ENCODE measurements at regions of chr10 and their contacts with region 1.

Region 1: GRCh38 chr10:89217057-89217990 is 10.2 kb upstream of the CH25H start:
- DNase-seq: peak; percentile 12
- ATAC-seq: peak; percentile 83
- H3K4me3 ChIP-seq: no peak overlapping the region
- H3K27ac ChIP-seq: no peak overlapping the region
- H3K4me1 ChIP-seq: peaks cover 3% of the 10 kb centered on the region; the same call in 1 of the 2 replicates
- H3K27me3 ChIP-seq: no peaks in the 10 kb centered on the region
- CTCF ChIP-seq: peak; percentile 50 to 66 (median 64)
- EP300 ChIP-seq: no peak
- POLR2A ChIP-seq: no peak
- RAD21 ChIP-seq: peak; percentile 77

Region 2: GRCh38 chr10:88944813-88945212 is 272.5 kb before region 1 on chr10:
- CTCF ChIA-PET with region 1: interaction called, 10 read pairs
- POLR2A ChIA-PET with region 1: no interaction called
- RAD21 ChIA-PET with region 1: interaction called, 5 read pairs
- SMC1A ChIA-PET with region 1: interaction called, 10 read pairs
- in situ Hi-C with region 1: no loop called
- intact Hi-C with region 1: no loop called
- DNase-seq: no peak
- ATAC-seq: peak; percentile 91
- H3K4me3 ChIP-seq: no peak overlapping the region
- H3K27ac ChIP-seq: 0 out of 2 replicates have a peak overlapping the region, but pooled peaks have one; percentile 45
- H3K4me1 ChIP-seq: peaks cover 4% of the 10 kb centered on the region
- H3K27me3 ChIP-seq: no peaks in the 10 kb centered on the region
- CTCF ChIP-seq: no peak
- EP300 ChIP-seq: peak in 1 of 2 experiments; percentile 38; a peak in 1 of 4 replicates
- POLR2A ChIP-seq: no peak
- RAD21 ChIP-seq: no peak

Region 3: DNA sequence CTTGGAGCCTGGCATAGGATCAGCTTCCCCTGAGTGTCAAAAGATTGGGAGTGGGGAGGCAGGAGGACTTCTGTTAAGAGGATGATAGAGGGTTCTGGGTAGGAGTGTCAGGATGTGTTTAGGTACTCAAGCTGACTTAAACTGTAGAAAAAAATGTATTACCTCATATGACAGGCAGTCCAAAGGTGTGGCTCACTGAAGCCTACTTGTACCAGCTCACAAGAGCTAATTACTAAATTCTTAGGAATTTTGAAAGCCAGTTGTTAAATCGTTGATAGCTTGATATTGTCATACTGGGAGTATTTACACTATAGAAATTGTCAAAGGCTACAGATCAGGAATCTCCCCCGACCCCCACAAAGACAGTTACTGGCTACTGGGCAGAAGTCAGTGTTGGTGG is 194.6 kb before region 1 on chr10:
- CTCF ChIA-PET with region 1: interaction called, 12 read pairs
- POLR2A ChIA-PET with region 1: no interaction called
- RAD21 ChIA-PET with region 1: interaction called, 4 read pairs
- SMC1A ChIA-PET with region 1: interaction called, 8 read pairs
- in situ Hi-C with region 1: no loop called
- intact Hi-C with region 1: no loop called
- DNase-seq: no peak
- ATAC-seq: no peak
- H3K4me3 ChIP-seq: no peak overlapping the region
- H3K27ac ChIP-seq: no peak overlapping the region
- H3K4me1 ChIP-seq: no peaks in the 10 kb centered on the region
- H3K27me3 ChIP-seq: no peaks in the 10 kb centered on the region
- CTCF ChIP-seq: no peak
- EP300 ChIP-seq: no peak
- POLR2A ChIP-seq: no peak
- RAD21 ChIP-seq: no peak

Region 4: GRCh38 chr10:89228962-89229361 is 11.6 kb after region 1 on chr10:
- CTCF ChIA-PET with region 1: interaction called, 22 read pairs
- POLR2A ChIA-PET with region 1: no interaction called
- RAD21 ChIA-PET with region 1: interaction called, 3 read pairs
- SMC1A ChIA-PET with region 1: interaction called, 5 read pairs
- in situ Hi-C with region 1: no loop called
- intact Hi-C with region 1: no loop called
- DNase-seq: no peak
- ATAC-seq: no peak
- H3K4me3 ChIP-seq: no peak overlapping the region
- H3K27ac ChIP-seq: no peak overlapping the region
- H3K4me1 ChIP-seq: no peaks in the 10 kb centered on the region
- H3K27me3 ChIP-seq: no peaks in the 10 kb centered on the region
- CTCF ChIP-seq: no peak
- EP300 ChIP-seq: no peak
- POLR2A ChIP-seq: no peak
- RAD21 ChIP-seq: no peak

Region 5: GRCh38 chr10:89251409-89252224 is 34.3 kb after region 1 on chr10 and contains the start of gene LIPA:
- CTCF ChIA-PET with region 1: interaction called, 25 read pairs
- POLR2A ChIA-PET with region 1: interaction called, 3 read pairs
- RAD21 ChIA-PET with region 1: interaction called, 11 read pairs
- SMC1A ChIA-PET with region 1: interaction called, 24 read pairs
- in situ Hi-C with region 1: no loop called
- intact Hi-C with region 1: no loop called
- DNase-seq: peak; percentile 95
- ATAC-seq: peak; percentile 97
- H3K4me3 ChIP-seq: peak within 1 kb of the TSS; percentile 84
- H3K27ac ChIP-seq: peak within 1 kb of the TSS; percentile 69
- H3K4me1 ChIP-seq: 0 out of 2 replicates have a peak, but pooled peaks cover 6% of the 10 kb centered on the region
- H3K27me3 ChIP-seq: no peaks in the 10 kb centered on the region
- CTCF ChIP-seq: no peak
- EP300 ChIP-seq: no peak
- POLR2A ChIP-seq: peak; percentile 84
- RAD21 ChIP-seq: no peak
- polyA plus RNA-seq, gene LIPA: 36.0 to 45.2 TPM

Region 6: DNA sequence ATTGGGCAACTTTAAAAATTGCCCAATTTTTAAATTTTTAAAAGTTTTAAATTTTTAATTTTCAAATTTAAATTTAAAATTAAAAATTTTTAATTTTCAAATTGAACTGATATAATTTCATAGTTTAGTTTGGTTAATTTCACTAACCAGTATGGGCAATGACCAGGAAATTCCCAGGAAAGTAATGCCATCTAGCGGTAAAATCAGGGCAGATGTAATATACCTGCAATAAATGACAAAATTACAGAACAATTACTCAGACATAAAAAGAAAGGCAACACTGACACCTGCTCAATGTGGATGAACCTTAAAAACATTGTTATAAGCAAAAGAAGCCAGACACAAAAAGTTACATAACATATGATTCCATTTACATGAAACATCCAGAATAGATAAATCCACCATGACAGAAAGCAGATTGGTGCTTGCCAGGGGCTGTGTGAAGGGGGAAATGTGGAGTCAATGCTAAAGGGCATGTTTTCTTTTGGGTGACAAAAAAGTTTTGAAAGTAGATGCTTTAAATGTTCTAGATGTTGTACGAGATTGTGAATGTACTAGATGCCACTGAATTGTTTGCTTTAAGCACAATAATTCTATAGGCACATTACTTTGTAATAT is 346.6 kb after region 1 on chr10:
- CTCF ChIA-PET with region 1: interaction called, 16 read pairs
- POLR2A ChIA-PET with region 1: no interaction called
- RAD21 ChIA-PET with region 1: interaction called, 7 read pairs
- SMC1A ChIA-PET with region 1: interaction called, 8 read pairs
- in situ Hi-C with region 1: no loop called
- intact Hi-C with region 1: loop called (anchors 2 kb)
- DNase-seq: peak; percentile 3
- ATAC-seq: peak; percentile 82
- H3K4me3 ChIP-seq: no peak overlapping the region
- H3K27ac ChIP-seq: no peak overlapping the region
- H3K4me1 ChIP-seq: no peaks in the 10 kb centered on the region
- H3K27me3 ChIP-seq: no peaks in the 10 kb centered on the region
- CTCF ChIP-seq: peak; percentile 51 to 57 (median 57)
- EP300 ChIP-seq: no peak
- POLR2A ChIP-seq: no peak
- RAD21 ChIP-seq: peak; percentile 87

Region 7: GRCh38 chr10:89591111-89591795 is 373.9 kb after region 1 on chr10:
- CTCF ChIA-PET with region 1: no interaction called
- POLR2A ChIA-PET with region 1: no interaction called
- RAD21 ChIA-PET with region 1: no interaction called
- SMC1A ChIA-PET with region 1: no interaction called
- in situ Hi-C with region 1: no loop called
- intact Hi-C with region 1: no loop called
- DNase-seq: no peak
- ATAC-seq: no peak
- H3K4me3 ChIP-seq: no peak overlapping the region
- H3K27ac ChIP-seq: no peak overlapping the region
- H3K4me1 ChIP-seq: no peaks in the 10 kb centered on the region
- H3K27me3 ChIP-seq: no peaks in the 10 kb centered on the region
- CTCF ChIP-seq: no peak
- EP300 ChIP-seq: no peak
- POLR2A ChIP-seq: no peak
- RAD21 ChIP-seq: no peak

Measured in GM12878 (cell line).